Esophagus muscularis mucosa (tissue), 4 donors: ENCODE measurements at regions of chr19 and their contacts with region 1.

Region 1: DNA sequence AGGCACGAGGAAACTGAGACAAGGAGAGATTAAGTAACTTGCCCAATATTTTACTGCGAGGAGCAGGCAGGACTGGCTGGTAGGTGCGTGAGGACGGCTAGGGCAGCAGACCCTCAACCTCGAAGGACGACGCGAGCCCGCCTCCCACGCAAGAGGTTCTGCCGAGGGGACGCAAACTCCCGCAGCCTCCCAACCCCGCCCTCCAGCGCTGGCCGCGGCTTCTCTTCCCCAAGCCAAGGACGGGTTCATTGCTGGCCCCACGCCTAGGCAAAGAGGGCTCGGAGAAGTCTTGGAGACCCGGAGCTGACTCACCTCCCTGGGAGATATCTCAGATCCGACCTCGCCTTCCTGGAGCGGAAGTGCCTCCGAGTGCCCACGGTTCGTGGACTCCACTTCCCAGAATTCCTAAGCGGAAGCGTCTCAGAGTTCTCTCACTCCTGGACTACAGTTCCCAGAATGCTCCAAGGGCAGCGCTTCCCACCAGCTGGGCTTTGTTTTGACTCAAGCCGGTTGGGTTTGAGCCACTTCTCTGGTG is at the start of gene ZNF235:
- DNase-seq: peak; percentile 95
- H3K4me3 ChIP-seq: peak within 1 kb of the TSS; percentile 67 to 84 (median 78)
- H3K27ac ChIP-seq: peak within 1 kb of the TSS; percentile 78 to 82 (median 80)
- H3K4me1 ChIP-seq: peaks cover 5 to 14% (median 11%) of the 10 kb centered on the region in 4 donors
- H3K27me3 ChIP-seq: no peaks in the 10 kb centered on the region
- CTCF ChIP-seq: peak in 1 of 3 experiments; percentile 6
- EP300 ChIP-seq: no peak
- POLR2A ChIP-seq: no peak
- total RNA-seq, gene ZNF235: 4.1 to 5.6 (median 4.5) TPM

Region 2: DNA sequence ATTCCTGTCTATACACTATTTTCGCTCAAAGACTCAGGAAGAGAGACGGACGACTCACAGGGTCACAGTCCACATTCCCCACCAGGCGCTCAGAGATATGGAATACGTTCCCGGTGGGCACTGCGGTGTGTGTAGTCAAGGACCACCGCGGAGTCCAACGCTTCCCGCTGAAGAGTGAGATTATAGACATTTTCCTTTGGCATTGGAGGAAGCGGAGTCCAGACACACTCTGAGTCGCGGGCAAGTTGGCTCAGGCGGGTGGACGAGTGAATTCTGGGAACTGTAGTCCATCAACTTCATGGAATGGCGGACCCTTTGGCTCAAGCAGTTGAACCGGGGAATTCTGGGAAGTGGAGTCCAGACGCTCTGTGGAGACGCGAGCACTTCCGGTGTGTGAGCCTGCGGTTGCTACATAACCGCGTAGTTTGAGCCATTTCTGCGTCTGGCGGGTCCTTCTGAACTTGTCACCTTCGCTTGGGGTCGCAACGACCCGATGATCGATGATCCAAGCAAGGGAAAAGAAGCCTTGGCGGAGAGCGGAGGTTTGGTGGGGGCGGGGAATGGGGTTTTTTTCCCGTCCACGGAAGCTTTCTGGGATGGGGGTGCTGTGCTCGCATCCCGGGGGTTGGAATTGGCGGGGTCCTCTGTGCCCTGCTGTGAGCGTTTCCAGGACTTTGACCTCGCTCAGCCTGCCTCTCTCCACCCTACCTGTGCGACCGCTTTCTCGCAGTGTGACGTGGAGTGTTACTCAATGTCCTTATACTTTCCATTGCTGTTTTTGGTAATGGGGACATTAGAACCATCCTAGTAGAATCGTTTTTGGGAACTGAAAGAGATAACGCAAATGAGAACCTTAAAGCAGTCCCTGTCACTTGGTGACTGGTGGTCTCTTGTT is 301.9 kb before region 1 on chr19 and contains the start of gene ZNF230:
- intact Hi-C with region 1: loop called (anchors 10 kb)
- DNase-seq: peak; percentile 96
- H3K4me3 ChIP-seq: peak within 1 kb of the TSS; percentile 65 to 79 (median 74)
- H3K27ac ChIP-seq: peak within 1 kb of the TSS; percentile 75 to 83 (median 80)
- H3K4me1 ChIP-seq: peaks cover 12 to 18% (median 14%) of the 10 kb centered on the region in 4 donors
- H3K27me3 ChIP-seq: no peaks in the 10 kb centered on the region
- CTCF ChIP-seq: peak in 1 of 3 experiments; percentile 18
- EP300 ChIP-seq: no peak
- POLR2A ChIP-seq: no peak
- total RNA-seq, gene ZNF230: 2.7 to 7.5 (median 3.5) TPM

Region 3: GRCh38 chr19:44164673-44165512 is 139.8 kb before region 1 on chr19 and contains the start of gene ZNF226:
- intact Hi-C with region 1: loop called (anchors 10 kb)
- DNase-seq: peak; percentile 95
- H3K4me3 ChIP-seq: peak within 1 kb of the TSS; percentile 67 to 82 (median 71)
- H3K27ac ChIP-seq: peak within 1 kb of the TSS; percentile 78 to 88 (median 87)
- H3K4me1 ChIP-seq: peaks cover 9 to 15% (median 13%) of the 10 kb centered on the region in 4 donors
- H3K27me3 ChIP-seq: no peaks in the 10 kb centered on the region
- CTCF ChIP-seq: no peak
- EP300 ChIP-seq: no peak
- POLR2A ChIP-seq: no peak
- total RNA-seq, gene ZNF226: 12.9 to 14.4 (median 13.2) TPM

Region 4: DNA sequence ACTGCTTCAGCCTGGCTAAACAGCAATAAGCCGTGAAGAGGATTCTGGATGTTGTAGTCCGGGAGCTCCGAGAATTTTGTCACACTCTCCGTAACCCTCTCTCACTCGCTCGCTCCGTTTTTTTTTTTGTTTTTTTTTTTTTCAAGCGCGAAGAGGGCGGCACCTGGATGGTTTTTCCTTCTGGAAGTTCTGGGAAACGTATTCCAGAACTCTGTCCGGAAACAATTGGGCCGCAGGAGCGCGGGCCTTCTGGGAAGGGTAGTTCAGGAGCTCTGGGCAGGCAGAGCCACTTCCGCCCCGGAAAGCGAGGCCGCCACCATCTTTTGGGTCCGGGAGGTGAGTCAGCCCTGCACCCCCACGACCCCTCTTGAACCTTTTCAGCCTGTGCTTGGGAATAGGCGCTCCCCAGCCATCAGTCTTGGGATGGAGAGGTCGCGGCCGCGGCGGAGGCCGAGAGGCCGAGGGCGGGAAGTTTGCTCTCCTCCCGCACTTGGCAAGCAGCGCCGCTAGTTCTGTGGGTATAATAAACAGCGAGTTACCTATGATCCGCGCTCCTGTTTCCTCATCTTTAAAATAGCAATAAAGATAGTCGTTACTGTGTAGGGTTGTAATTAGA is 92.4 kb before region 1 on chr19 and contains the start of gene ZNF227:
- intact Hi-C with region 1: loop called (anchors 5 kb)
- DNase-seq: peak; percentile 96
- H3K4me3 ChIP-seq: peak within 1 kb of the TSS; percentile 67 to 82 (median 74)
- H3K27ac ChIP-seq: peak within 1 kb of the TSS; percentile 85 to 88 (median 86)
- H3K4me1 ChIP-seq: peaks cover 14 to 27% (median 18%) of the 10 kb centered on the region in 4 donors
- H3K27me3 ChIP-seq: no peaks in the 10 kb centered on the region
- CTCF ChIP-seq: no peak
- EP300 ChIP-seq: peak; percentile 31
- POLR2A ChIP-seq: no peak
- total RNA-seq, gene ZNF227: 10.9 to 13.3 (median 12.4) TPM

Region 5: DNA sequence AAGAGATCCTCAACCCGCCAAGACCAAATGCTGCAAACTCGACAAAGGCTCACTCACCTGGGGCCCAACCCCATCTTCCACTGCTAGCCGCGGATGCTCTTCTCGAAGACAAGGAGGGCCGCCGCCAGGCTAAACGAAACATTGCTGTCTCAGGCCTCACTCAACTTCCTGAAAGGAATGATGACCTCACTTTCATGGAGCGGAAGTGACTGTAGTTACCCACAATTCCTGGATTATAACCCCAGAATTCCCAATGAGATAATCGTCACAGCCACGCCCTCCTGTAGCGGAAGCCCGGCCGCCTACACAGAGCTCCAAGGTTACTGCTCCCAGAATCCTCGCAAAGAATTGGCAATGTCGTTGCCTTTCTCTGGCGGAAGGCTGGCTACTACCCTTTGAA is 62.3 kb after region 1 on chr19:
- intact Hi-C with region 1: no loop called
- DNase-seq: no peak
- H3K4me3 ChIP-seq: no peak overlapping the region
- H3K27ac ChIP-seq: no peak overlapping the region
- H3K4me1 ChIP-seq: no peaks in the 10 kb centered on the region
- H3K27me3 ChIP-seq: no peaks in the 10 kb centered on the region
- CTCF ChIP-seq: no peak
- EP300 ChIP-seq: no peak
- POLR2A ChIP-seq: no peak